ENCODE measurements at regions of chr14 and their contacts with region 1.

Region 1: GRCh38 chr14:23379366-23380196 is 2.7 kb downstream of the CMTM5 start:
- DNase-seq: peak; percentile 40
- ATAC-seq: peak; percentile 96
- H3K4me3 ChIP-seq: no peak overlapping the region
- H3K27ac ChIP-seq: no peak overlapping the region
- H3K4me1 ChIP-seq: no peaks in the 10 kb centered on the region
- H3K27me3 ChIP-seq: 0 out of 2 replicates have a peak, but pooled peaks cover 6% of the 10 kb centered on the region
- CTCF ChIP-seq: peak; percentile 90 to 99 (median 98)
- POLR2A ChIP-seq: no peak
- RAD21 ChIP-seq: peak; percentile 93

Region 2: DNA sequence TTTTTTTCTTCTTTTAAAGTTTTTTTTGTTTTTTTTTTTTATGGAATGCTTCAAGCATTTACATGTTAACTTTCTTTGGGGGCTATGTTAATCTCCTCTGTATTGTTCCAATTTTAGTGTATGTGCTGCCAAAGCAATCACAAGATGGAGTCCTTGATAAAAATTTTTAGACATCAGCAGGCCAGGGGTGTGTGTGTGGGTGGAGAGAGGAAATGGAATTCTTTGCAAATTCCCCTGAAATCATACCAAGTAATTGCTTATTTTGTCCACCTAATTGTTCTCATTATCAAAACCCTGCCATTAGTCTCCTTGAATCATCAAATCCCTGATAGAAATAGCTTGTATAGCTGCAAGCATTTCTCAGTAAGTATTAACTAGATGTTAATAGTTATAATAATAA is 120.2 kb before region 1 on chr14:
- CTCF ChIA-PET with region 1: interaction called, 10 read pairs
- POLR2A ChIA-PET with region 1: no interaction called
- RAD21 ChIA-PET with region 1: no interaction called
- intact Hi-C with region 1: no loop called
- DNase-seq: no peak
- ATAC-seq: no peak
- H3K4me3 ChIP-seq: no peak overlapping the region
- H3K27ac ChIP-seq: no peak overlapping the region
- H3K4me1 ChIP-seq: no peaks in the 10 kb centered on the region
- H3K27me3 ChIP-seq: no peaks in the 10 kb centered on the region; the same call in none of the 2 replicates
- CTCF ChIP-seq: no peak
- POLR2A ChIP-seq: no peak
- RAD21 ChIP-seq: no peak

Region 3: DNA sequence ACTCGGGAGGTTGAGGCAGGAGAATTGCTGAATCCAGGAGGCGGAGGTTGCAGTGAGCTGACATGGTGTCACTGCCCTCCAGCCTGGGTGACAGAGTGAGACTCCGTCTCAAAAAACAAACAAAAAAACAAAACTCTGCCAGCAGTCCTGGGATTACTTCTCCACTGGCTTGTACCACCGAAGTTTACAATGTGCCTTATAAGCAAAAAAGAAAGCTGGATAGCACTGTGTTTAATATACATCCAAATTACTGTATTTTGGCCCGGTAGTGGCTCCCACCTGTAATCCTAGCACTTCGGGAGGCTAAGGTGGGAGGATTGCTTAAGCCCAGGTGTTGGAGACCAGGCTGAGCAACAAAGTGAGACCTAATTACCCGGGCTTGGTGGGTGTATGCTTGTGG is 110.4 kb before region 1 on chr14:
- CTCF ChIA-PET with region 1: interaction called, 10 read pairs
- POLR2A ChIA-PET with region 1: no interaction called
- RAD21 ChIA-PET with region 1: no interaction called
- intact Hi-C with region 1: loop called (anchors 1 kb)
- DNase-seq: no peak
- ATAC-seq: no peak
- H3K4me3 ChIP-seq: no peak overlapping the region
- H3K27ac ChIP-seq: no peak overlapping the region
- H3K4me1 ChIP-seq: no peaks in the 10 kb centered on the region
- H3K27me3 ChIP-seq: no peaks in the 10 kb centered on the region; the same call in 1 of the 2 replicates
- CTCF ChIP-seq: no peak
- POLR2A ChIP-seq: no peak
- RAD21 ChIP-seq: no peak

Region 4: DNA sequence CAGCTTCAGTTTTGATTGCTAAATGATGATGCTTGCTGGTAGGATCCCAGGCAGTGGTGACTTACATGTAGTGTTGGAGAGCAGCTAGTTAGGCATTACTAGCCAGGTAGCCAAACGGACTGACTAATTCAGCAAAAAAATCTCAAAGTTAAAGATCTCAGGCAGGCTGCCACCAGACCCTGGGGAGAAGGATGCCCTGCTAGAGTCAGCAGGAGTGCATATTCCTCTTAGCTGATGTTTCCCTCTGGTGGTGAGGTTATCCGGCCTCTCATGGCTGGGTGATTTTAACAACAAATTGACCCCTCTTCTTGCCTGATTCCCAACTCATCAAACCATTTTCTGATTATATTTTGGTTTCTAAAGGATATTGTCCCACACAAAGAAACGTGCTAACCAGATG is 17.4 kb before region 1 on chr14:
- CTCF ChIA-PET with region 1: interaction called, 10 read pairs
- POLR2A ChIA-PET with region 1: no interaction called
- RAD21 ChIA-PET with region 1: interaction called in 1 of 2 experiments, 6 read pairs
- intact Hi-C with region 1: no loop called
- DNase-seq: no peak
- ATAC-seq: no peak
- H3K4me3 ChIP-seq: no peak overlapping the region
- H3K27ac ChIP-seq: no peak overlapping the region
- H3K4me1 ChIP-seq: no peaks in the 10 kb centered on the region
- H3K27me3 ChIP-seq: 0 out of 2 replicates have a peak, but pooled peaks cover 3% of the 10 kb centered on the region
- CTCF ChIP-seq: peak; percentile 10 to 18 (median 17); a peak in 3 of 6 replicates
- POLR2A ChIP-seq: no peak
- RAD21 ChIP-seq: peak; percentile 32; the same call in 1 of the 2 replicates